GM13976 (cell line): ENCODE measurements at regions of chr5 and their contacts with region 1.

Region 1: GRCh38 chr5:139517683-139518564 is 35.4 kb upstream of the STING1 start:
- DNase-seq: peak; percentile 96
- CTCF ChIP-seq: peak; percentile 99

Region 2: GRCh38 chr5:139222335-139222734 is 295.6 kb before region 1 on chr5:
- in situ Hi-C with region 1: no loop called
- DNase-seq: no peak
- CTCF ChIP-seq: no peak

Region 3: GRCh38 chr5:139422307-139422893 is 95.5 kb before region 1 on chr5:
- in situ Hi-C with region 1: loop called (anchors 5 kb)
- DNase-seq: peak; percentile 86
- CTCF ChIP-seq: peak; percentile 67

Region 4: GRCh38 chr5:139619861-139620260 is 101.9 kb after region 1 on chr5:
- in situ Hi-C with region 1: no loop called
- DNase-seq: no peak
- CTCF ChIP-seq: no peak